Activated CD8-positive, alpha-beta T cell treated with anti-CD3 and anti-CD28 coated beads, Interleukin-2, amount 10 ng/mL, durations not matched to agents 7 days and 5 days (primary cell): ENCODE measurements at regions of chr11 and their contacts with region 1.

Region 1: DNA sequence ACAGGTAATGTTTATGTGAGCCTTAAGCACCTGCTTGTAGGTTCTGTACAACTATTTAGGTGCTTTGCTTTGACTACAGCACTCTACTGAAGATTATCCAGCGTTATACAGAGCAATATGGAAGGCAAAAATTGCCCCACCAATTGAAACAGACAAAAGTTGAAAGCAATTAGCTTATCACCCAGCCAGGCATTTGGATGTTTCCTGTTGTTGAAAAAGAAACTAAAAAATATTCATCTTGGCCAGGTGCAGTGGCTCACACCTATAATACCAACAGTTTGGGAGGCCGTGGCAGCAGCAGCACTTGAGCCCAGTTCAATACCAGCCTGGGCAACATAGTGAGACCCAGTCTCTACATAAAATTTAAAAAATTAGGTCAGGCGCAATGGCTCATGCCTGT is 18.5 kb downstream of the ATL3 start:
- DNase-seq: no peak
- ATAC-seq: peak; percentile 30
- H3K4me3 Mint-ChIP-seq: no peak overlapping the region
- H3K27ac Mint-ChIP-seq: no peak overlapping the region
- H3K4me1 Mint-ChIP-seq: peaks cover 8% of the 10 kb centered on the region
- H3K27me3 Mint-ChIP-seq: no peaks in the 10 kb centered on the region

Region 2: GRCh38 chr11:63536669-63537292 is 115.9 kb before region 1 on chr11 and contains the start of gene PLAAT4:
- CTCF ChIA-PET with region 1: no interaction called
- POLR2A ChIA-PET with region 1: no interaction called
- DNase-seq: peak; percentile 48
- ATAC-seq: peak; percentile 71
- H3K4me3 Mint-ChIP-seq: peak within 1 kb of the TSS; percentile 84
- H3K27ac Mint-ChIP-seq: peak within 1 kb of the TSS; percentile 92
- H3K4me1 Mint-ChIP-seq: peaks cover 70% of the 10 kb centered on the region
- H3K27me3 Mint-ChIP-seq: no peaks in the 10 kb centered on the region
- total RNA-seq, gene PLAAT4: 97.5 to 99.8 TPM

Region 3: DNA sequence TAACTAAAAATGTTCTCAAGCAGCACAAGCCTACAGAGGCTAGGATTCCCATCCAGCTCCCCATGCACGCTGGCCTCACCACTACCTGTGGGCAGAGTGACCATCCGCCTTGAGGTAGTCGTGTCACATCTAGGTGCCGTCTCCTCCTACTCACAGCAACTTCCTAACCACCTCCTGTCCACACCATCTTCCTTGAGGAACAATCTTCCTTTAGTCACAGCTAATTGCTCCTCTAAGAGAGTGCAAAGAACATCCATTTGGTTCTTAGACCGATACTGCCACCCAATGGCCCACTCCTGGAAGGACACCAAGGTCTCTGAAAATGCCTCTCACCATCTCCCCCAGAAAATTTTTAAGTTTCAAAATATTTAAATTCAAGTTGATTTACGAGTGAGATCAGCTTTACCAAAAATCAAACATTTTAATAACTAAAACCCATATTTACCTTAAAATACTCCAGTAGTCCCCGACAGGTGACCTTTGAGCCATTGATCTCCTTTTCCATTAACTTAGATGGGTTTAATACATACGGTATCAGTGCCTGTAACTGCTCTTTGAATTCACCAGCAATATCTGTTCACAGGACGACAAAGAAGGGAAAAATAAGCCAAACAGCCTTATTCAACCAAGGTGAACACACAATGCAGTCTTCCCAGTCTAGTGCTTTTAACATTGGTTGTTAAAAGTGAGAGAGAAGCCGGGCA is 16.8 kb before region 1 on chr11:
- CTCF ChIA-PET with region 1: interaction called, 10 read pairs
- POLR2A ChIA-PET with region 1: no interaction called
- DNase-seq: peak; percentile 74
- ATAC-seq: peak; percentile 79
- H3K4me3 Mint-ChIP-seq: no peak overlapping the region
- H3K27ac Mint-ChIP-seq: no peak overlapping the region
- H3K4me1 Mint-ChIP-seq: peaks cover 10% of the 10 kb centered on the region
- H3K27me3 Mint-ChIP-seq: no peaks in the 10 kb centered on the region